T-cell (primary cell): ENCODE measurements at regions of chr2 and their contacts with region 1.

Region 1: DNA sequence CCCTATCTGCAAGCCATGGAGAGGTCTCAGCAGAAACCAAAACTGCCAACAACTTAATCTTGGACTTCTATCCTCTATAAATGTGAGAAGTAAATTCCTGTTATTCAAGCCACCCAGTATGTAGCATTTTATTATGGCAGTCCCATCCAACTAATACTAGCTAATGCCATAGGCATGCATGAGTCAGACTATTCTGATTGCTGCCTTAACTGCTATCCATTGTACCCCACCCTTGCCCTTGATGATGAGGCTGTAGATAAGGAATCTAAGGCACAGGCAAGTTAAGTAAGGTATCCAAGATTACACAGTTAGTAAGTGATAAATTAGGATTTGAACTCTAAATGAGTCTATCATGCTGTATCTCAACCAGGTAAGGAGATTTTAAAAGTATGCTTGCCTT is 223.0 kb downstream of the UBE2E3 start:
- DNase-seq: no peak
- ATAC-seq: no peak
- H3K4me3 ChIP-seq: no peak overlapping the region
- H3K4me3 Mint-ChIP-seq: no peak overlapping the region
- H3K27ac ChIP-seq: no peak overlapping the region
- H3K27ac Mint-ChIP-seq: peak overlapping the region; percentile 11 to 23
- H3K4me1 ChIP-seq: peaks cover 4 to 8% of the 10 kb centered on the region in 2 experiments
- H3K4me1 Mint-ChIP-seq: peaks cover 27 to 35% (median 27%) of the 10 kb centered on the region in 3 donors
- H3K27me3 ChIP-seq: no peaks in the 10 kb centered on the region
- H3K27me3 Mint-ChIP-seq: no peaks in the 10 kb centered on the region

Region 2: GRCh38 chr2:181312515-181312927 is 109.1 kb after region 1 on chr2:
- CTCF ChIA-PET with region 1: interaction called in 1 of 2 experiments, 10 read pairs
- POLR2A ChIA-PET with region 1: no interaction called
- DNase-seq: peak in 9 of 35 experiments; percentile 8 to 64 (median 21)
- ATAC-seq: peak; percentile 41 to 69 (median 54)
- H3K4me3 ChIP-seq: peak overlapping the region in 1 of 2 donors; percentile 33
- H3K4me3 Mint-ChIP-seq: peak overlapping the region; percentile 45 to 73 (median 70)
- H3K27ac ChIP-seq: peak overlapping the region; percentile 98
- H3K27ac Mint-ChIP-seq: peak overlapping the region; percentile 93 to 99
- H3K4me1 ChIP-seq: peaks cover 35 to 56% of the 10 kb centered on the region in 2 experiments
- H3K4me1 Mint-ChIP-seq: peaks cover 56 to 62% (median 60%) of the 10 kb centered on the region in 3 donors
- H3K27me3 ChIP-seq: no peaks in the 10 kb centered on the region
- H3K27me3 Mint-ChIP-seq: no peaks in the 10 kb centered on the region

Region 3: GRCh38 chr2:181949047-181949446 is 745.6 kb after region 1 on chr2:
- CTCF ChIA-PET with region 1: no interaction called
- POLR2A ChIA-PET with region 1: interaction called in 1 of 2 experiments, 10 read pairs
- DNase-seq: no peak
- ATAC-seq: no peak
- H3K4me3 ChIP-seq: no peak overlapping the region
- H3K4me3 Mint-ChIP-seq: no peak overlapping the region
- H3K27ac ChIP-seq: no peak overlapping the region
- H3K27ac Mint-ChIP-seq: no peak overlapping the region
- H3K4me1 ChIP-seq: peaks cover 2 to 5% of the 10 kb centered on the region in 2 experiments
- H3K4me1 Mint-ChIP-seq: peaks cover 6 to 8% (median 7%) of the 10 kb centered on the region in 3 donors
- H3K27me3 ChIP-seq: peaks cover 0 to 3% of the 10 kb centered on the region in 2 experiments
- H3K27me3 Mint-ChIP-seq: peaks cover 10 to 19% of the 10 kb centered on the region in 2 donors